Aorta (tissue), 5 donors: ENCODE measurements at regions of chr11 and their contacts with region 1.

Region 1: GRCh38 chr11:77127232-77127911 is 674 bp upstream of the MYO7A start:
- DNase-seq: peak; percentile 68 to 88
- ATAC-seq: peak; percentile 84
- H3K4me3 ChIP-seq: peak overlapping the region; percentile 1 to 8
- H3K27ac ChIP-seq: no peak overlapping the region
- H3K4me1 ChIP-seq: no peaks in the 10 kb centered on the region
- H3K27me3 ChIP-seq: no peaks in the 10 kb centered on the region

Region 2: DNA sequence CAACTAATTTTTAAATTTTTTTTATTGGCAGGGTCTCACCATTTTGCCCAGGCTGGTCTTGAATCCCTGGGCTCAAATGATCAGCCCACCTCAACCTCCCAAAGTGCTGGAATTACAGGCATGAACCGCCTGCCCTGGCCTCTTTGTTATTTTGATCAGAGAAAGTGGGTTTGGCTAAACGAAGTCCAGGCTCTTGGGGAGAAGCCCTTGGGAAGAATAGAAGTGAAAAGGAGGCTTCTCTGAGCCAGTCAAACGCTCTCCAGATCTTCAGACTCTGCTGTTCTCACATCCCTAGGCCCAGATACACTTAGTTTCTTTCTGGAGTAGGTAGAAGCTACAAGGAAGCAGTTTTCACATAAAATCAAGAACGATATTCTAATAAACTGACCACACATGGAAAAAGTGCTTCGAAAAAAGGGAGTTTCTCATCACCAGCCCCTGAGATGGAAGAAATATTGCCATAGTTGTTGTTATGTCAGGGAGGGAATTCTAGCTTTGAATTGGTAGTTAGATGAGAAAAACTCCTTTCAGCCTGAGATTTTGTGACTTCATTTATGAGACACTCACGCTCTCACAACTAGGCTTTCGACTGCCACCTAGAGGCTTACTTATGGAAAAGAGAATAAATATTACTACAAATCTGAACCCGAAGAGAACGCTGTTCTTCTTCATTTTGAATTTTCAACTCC is 420.6 kb after region 1 on chr11:
- intact Hi-C with region 1: loop called (anchors 2 to 5 kb)
- DNase-seq: no peak
- ATAC-seq: no peak
- H3K4me3 ChIP-seq: no peak overlapping the region
- H3K27ac ChIP-seq: no peak overlapping the region
- H3K4me1 ChIP-seq: no peaks in the 10 kb centered on the region
- H3K27me3 ChIP-seq: no peaks in the 10 kb centered on the region